Endothelial cell of umbilical vein (primary cell): ENCODE measurements at regions of chr15 and their contacts with region 1.

Region 1: GRCh38 chr15:33700695-33701304 is 267.5 kb upstream of the CHRM5 start:
- DNase-seq: peak; percentile 85
- H3K4me3 ChIP-seq: no peak overlapping the region
- H3K27ac ChIP-seq: no peak overlapping the region
- H3K4me1 ChIP-seq: no peaks in the 10 kb centered on the region
- H3K27me3 ChIP-seq: peaks cover 0 to 3% of the 10 kb centered on the region in 2 experiments
- CTCF ChIP-seq: peak; percentile 96 to 97
- POLR2A ChIP-seq: no peak

Region 2: DNA sequence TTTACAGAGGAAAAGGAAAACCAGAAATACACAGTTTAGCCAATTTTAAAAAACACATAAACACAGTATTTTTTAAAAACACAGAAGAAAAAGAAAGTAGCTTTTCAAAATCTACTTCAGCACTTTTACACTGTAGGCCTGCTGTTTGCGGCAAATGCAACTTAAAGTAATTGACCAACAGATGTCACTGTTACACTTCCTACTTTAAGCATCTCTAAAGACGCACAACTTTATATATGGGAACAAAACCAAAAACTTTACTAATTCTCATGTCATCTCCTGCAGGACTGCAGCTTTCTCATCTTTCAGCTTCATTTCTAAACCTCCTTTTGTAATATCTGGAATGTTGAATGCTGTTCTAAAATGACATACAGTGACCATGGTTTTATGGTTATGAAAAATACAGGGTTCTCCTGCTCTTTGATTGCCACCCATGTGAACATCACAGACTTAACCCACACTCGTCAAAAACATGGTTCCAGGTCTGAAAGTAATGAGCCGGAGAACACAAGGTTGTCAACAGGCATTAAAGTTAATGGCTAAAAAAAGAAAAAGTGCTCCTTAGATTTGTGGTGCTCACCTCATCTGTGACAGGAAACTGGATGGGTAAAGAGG is 614.2 kb before region 1 on chr15:
- CTCF ChIA-PET with region 1: interaction called, 5 read pairs
- POLR2A ChIA-PET with region 1: no interaction called
- dilution Hi-C with region 1: no loop called
- intact Hi-C with region 1: loop called (anchors 1 kb)
- DNase-seq: peak; percentile 62
- H3K4me3 ChIP-seq: no peak overlapping the region
- H3K27ac ChIP-seq: no peak overlapping the region
- H3K4me1 ChIP-seq: no peaks in the 10 kb centered on the region
- H3K27me3 ChIP-seq: no peaks in the 10 kb centered on the region
- CTCF ChIP-seq: peak; percentile 35 to 44
- POLR2A ChIP-seq: no peak

Region 3: GRCh38 chr15:33234014-33234461 is 466.8 kb before region 1 on chr15:
- CTCF ChIA-PET with region 1: interaction called, 51 read pairs
- POLR2A ChIA-PET with region 1: no interaction called
- dilution Hi-C with region 1: no loop called
- intact Hi-C with region 1: loop called (anchors 2 kb)
- DNase-seq: peak; percentile 41
- H3K4me3 ChIP-seq: no peak overlapping the region
- H3K27ac ChIP-seq: no peak overlapping the region
- H3K4me1 ChIP-seq: no peaks in the 10 kb centered on the region
- H3K27me3 ChIP-seq: peaks cover 9% of the 10 kb centered on the region in 2 experiments
- CTCF ChIP-seq: peak; percentile 21 to 39
- POLR2A ChIP-seq: no peak

Region 4: GRCh38 chr15:33292717-33293307 is 408.0 kb before region 1 on chr15:
- CTCF ChIA-PET with region 1: interaction called, 223 read pairs
- POLR2A ChIA-PET with region 1: no interaction called
- dilution Hi-C with region 1: no loop called
- intact Hi-C with region 1: loop called (anchors 1 kb)
- DNase-seq: peak; percentile 69
- H3K4me3 ChIP-seq: no peak overlapping the region
- H3K27ac ChIP-seq: no peak overlapping the region
- H3K4me1 ChIP-seq: peaks cover 3% of the 10 kb centered on the region
- H3K27me3 ChIP-seq: peaks cover 10 to 19% of the 10 kb centered on the region in 2 experiments
- CTCF ChIP-seq: peak; percentile 57 to 59
- POLR2A ChIP-seq: no peak

Region 5: GRCh38 chr15:33492434-33493052 is 208.3 kb before region 1 on chr15:
- CTCF ChIA-PET with region 1: no interaction called
- POLR2A ChIA-PET with region 1: no interaction called
- dilution Hi-C with region 1: no loop called
- intact Hi-C with region 1: no loop called
- DNase-seq: no peak
- H3K4me3 ChIP-seq: no peak overlapping the region
- H3K27ac ChIP-seq: no peak overlapping the region
- H3K4me1 ChIP-seq: no peaks in the 10 kb centered on the region
- H3K27me3 ChIP-seq: no peaks in the 10 kb centered on the region
- CTCF ChIP-seq: no peak
- POLR2A ChIP-seq: no peak

Region 6: DNA sequence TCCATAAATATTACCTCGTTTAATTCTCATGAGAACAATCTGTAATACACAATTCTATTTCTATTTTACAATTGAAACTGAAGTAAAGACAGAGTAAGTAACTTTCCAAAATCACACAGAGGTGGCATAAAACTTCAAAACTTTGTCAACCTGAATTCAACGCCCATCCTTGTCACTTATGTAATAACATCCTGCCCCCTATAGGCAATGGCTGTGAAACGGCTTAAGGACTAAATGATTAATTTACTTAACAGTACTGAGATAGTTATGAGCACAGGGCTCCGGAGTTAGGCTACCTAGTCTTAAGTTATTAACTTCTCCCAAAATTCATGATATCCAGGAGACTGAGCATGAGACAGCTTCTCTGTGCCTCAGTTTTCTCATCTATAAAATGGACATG is 25.6 kb before region 1 on chr15:
- CTCF ChIA-PET with region 1: interaction called, 11 read pairs
- POLR2A ChIA-PET with region 1: no interaction called
- dilution Hi-C with region 1: no loop called
- intact Hi-C with region 1: no loop called
- DNase-seq: peak; percentile 28
- H3K4me3 ChIP-seq: no peak overlapping the region
- H3K27ac ChIP-seq: no peak overlapping the region
- H3K4me1 ChIP-seq: no peaks in the 10 kb centered on the region
- H3K27me3 ChIP-seq: peaks cover 7 to 9% of the 10 kb centered on the region in 2 experiments
- CTCF ChIP-seq: peak; percentile 15 to 16
- POLR2A ChIP-seq: no peak

Region 7: DNA sequence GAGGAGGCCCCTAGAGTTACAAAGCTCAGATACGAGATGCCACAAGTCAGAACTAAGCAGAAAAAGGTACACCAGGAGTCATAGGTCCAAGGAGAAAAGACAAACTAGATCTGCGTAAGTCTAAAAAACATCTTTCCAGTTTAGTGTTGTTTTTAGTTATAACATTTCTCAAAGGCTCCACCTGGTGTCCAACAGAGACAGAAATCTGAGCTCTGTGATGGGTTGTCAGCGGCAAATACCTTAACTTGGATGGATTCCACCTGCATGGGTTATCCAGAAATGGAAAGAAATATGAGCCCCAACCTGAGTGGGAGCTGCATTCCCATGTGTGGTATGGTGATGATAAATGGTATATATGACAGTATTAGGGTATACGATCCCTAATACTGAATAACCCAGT is 28.9 kb after region 1 on chr15:
- CTCF ChIA-PET with region 1: interaction called, 170 read pairs
- POLR2A ChIA-PET with region 1: no interaction called
- dilution Hi-C with region 1: no loop called
- intact Hi-C with region 1: loop called (anchors 2 kb)
- DNase-seq: peak; percentile 34
- H3K4me3 ChIP-seq: no peak overlapping the region
- H3K27ac ChIP-seq: no peak overlapping the region
- H3K4me1 ChIP-seq: peaks cover 8% of the 10 kb centered on the region
- H3K27me3 ChIP-seq: no peaks in the 10 kb centered on the region
- CTCF ChIP-seq: peak; percentile 19 to 28
- POLR2A ChIP-seq: no peak